H1 (cell line): ENCODE measurements at regions of chr18 and their contacts with region 1.

Region 1: GRCh38 chr18:21191596-21192307 is 50.3 kb upstream of the GREB1L start:
- DNase-seq: peak; percentile 43 to 66
- H3K4me3 ChIP-seq: no peak overlapping the region
- H3K27ac ChIP-seq: no peak overlapping the region
- H3K4me1 ChIP-seq: no peaks in the 10 kb centered on the region
- H3K27me3 ChIP-seq: no peaks in the 10 kb centered on the region
- CTCF ChIP-seq: peak; percentile 80 to 89 (median 84)
- EP300 ChIP-seq: no peak
- POLR2A ChIP-seq: no peak
- RAD21 ChIP-seq: peak; percentile 71 to 80

Region 2: DNA sequence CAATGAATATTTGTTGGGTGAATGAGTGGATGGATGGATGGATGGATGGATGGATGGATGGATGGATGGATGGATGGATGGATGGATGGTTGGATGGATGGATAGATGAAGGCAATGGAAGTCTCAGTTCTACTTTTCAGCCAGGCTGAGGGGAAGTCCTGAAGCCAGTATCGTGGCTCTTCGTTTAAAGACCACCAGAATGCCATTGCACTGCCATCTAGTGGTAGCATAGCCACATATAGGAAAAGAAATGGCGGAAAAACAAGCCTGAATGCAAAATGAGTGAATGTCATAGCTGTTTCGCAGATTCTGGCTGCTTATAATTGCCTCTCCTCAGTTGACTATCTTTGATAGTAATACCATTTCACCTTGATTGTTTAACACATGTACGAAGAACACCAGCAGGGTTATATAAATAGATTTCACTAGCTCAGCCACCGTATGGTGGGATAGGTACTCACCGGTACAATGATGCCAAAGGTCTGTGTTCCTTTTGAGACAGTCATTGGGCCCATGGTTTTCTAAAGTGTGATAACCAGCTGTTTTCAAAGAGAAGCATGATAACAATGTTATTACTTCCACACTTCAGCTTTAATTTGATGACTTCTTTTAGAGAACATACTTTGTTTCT is 12.0 kb before region 1 on chr18:
- CTCF ChIA-PET with region 1: interaction called, 17 read pairs
- POLR2A ChIA-PET with region 1: no interaction called
- DNase-seq: peak in 1 of 2 experiments; percentile 62
- H3K4me3 ChIP-seq: no peak overlapping the region
- H3K27ac ChIP-seq: no peak overlapping the region
- H3K4me1 ChIP-seq: no peaks in the 10 kb centered on the region
- H3K27me3 ChIP-seq: no peaks in the 10 kb centered on the region
- CTCF ChIP-seq: peak in 2 of 3 experiments; percentile 77 to 87; a peak in 3 of 4 replicates
- EP300 ChIP-seq: no peak
- POLR2A ChIP-seq: no peak
- RAD21 ChIP-seq: peak; percentile 87 to 89

Region 3: DNA sequence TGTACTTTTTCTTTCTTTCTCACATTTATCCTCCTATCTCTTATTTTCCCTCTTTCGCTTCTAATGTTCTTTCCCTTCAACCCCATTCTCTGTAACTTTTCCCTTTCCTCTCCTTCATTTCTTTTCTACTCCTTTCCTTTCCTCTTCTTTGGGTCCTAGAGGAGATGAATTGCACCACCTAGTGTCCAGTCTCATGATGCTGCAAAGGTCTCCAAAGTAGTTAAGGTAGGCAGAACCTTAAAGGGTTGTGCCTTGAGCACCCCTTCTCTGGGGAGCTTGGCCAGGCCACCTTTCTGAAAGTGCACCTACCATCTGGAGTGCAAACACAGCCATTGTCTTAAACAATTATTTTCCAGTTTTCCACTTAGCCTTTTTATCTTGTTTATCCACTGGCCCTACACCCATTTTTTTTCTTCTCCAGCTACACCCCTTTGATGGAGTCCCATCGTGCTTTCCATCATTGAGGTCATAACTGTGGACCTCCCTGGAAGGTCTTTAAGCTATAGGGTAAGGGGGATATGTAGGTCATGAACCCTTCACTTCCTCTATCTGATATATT is 252.8 kb after region 1 on chr18:
- CTCF ChIA-PET with region 1: interaction called, 46 read pairs
- POLR2A ChIA-PET with region 1: no interaction called
- DNase-seq: no peak
- H3K4me3 ChIP-seq: no peak overlapping the region
- H3K27ac ChIP-seq: no peak overlapping the region
- H3K4me1 ChIP-seq: peaks cover 0 to 3% (median 0%) of the 10 kb centered on the region in 4 experiments; a peak in 1 of 7 replicates
- H3K27me3 ChIP-seq: no peaks in the 10 kb centered on the region
- CTCF ChIP-seq: peak; percentile 13 to 76 (median 68)
- EP300 ChIP-seq: no peak
- POLR2A ChIP-seq: no peak
- RAD21 ChIP-seq: peak; percentile 92 to 93

Region 4: DNA sequence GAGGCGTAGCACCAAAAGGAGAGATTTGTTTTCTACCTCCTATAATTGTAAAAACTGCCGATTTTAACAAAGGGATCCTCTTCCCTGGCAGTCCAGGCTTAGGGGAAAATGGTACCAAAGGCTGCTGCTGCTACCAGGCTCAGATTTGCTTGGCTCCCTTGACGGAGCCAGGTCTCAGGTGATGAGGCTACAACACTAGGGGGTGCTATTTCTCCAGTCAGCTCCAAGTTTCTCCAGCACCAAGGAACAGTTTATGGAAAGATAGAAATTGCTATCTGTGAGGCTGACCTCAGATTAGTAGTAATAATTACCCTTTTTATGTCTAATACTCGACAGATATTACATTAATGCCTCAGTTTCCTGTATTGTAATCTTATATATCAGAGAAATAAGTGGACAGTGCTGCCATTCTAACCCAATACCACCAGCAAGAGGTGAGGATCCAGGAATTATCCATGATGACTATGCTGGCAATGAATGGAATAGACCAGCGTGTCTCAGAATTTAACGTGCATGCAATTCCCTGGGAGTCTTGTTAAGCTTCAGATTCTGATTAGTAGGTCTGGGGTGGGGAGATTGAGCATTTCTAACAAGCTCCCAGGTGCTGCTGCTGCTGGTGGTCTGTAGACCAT is 297.5 kb after region 1 on chr18:
- CTCF ChIA-PET with region 1: interaction called, 14 read pairs
- POLR2A ChIA-PET with region 1: no interaction called
- DNase-seq: peak; percentile 29 to 66
- H3K4me3 ChIP-seq: no peak overlapping the region
- H3K27ac ChIP-seq: no peak overlapping the region
- H3K4me1 ChIP-seq: no peaks in the 10 kb centered on the region; a peak in 2 of 7 replicates
- H3K27me3 ChIP-seq: no peaks in the 10 kb centered on the region; a peak in 1 of 7 replicates
- CTCF ChIP-seq: peak; percentile 76 to 86 (median 77)
- EP300 ChIP-seq: no peak
- POLR2A ChIP-seq: no peak
- RAD21 ChIP-seq: peak; percentile 87 to 89